CD8-positive, alpha-beta T cell (primary cell): ENCODE measurements at regions of chr17 and their contacts with region 1.

Region 1: GRCh38 chr17:28644985-28645939 is at the start of gene BLTP2:
- DNase-seq: peak; percentile 91 to 98 (median 96)
- ATAC-seq: peak; percentile 98
- H3K4me3 ChIP-seq: peak within 1 kb of the TSS; percentile 81 to 82
- H3K4me3 Mint-ChIP-seq: peak within 1 kb of the TSS; percentile 90
- H3K27ac ChIP-seq: peak within 1 kb of the TSS; percentile 75 to 89
- H3K27ac Mint-ChIP-seq: peak within 1 kb of the TSS; percentile 95
- H3K4me1 ChIP-seq: peaks cover 34% of the 10 kb centered on the region
- H3K4me1 Mint-ChIP-seq: peaks cover 46% of the 10 kb centered on the region
- H3K27me3 ChIP-seq: no peaks in the 10 kb centered on the region
- H3K27me3 Mint-ChIP-seq: no peaks in the 10 kb centered on the region
- CTCF ChIP-seq: no peak
- total RNA-seq, gene BLTP2: 136 to 148 TPM

Region 2: GRCh38 chr17:28576758-28577465 is 68.3 kb before region 1 on chr17 and contains the start of gene ALDOC:
- CTCF ChIA-PET with region 1: no interaction called
- POLR2A ChIA-PET with region 1: interaction called, 10 read pairs
- intact Hi-C with region 1: no loop called
- DNase-seq: peak; percentile 95 to 99 (median 99)
- ATAC-seq: peak; percentile 99
- H3K4me3 ChIP-seq: peak within 1 kb of the TSS; percentile 36 to 40
- H3K4me3 Mint-ChIP-seq: peak within 1 kb of the TSS; percentile 81
- H3K27ac ChIP-seq: peak within 1 kb of the TSS; percentile 17 to 62
- H3K27ac Mint-ChIP-seq: peak within 1 kb of the TSS; percentile 92
- H3K4me1 ChIP-seq: peaks cover 28% of the 10 kb centered on the region
- H3K4me1 Mint-ChIP-seq: peaks cover 42% of the 10 kb centered on the region
- H3K27me3 ChIP-seq: no peaks in the 10 kb centered on the region
- H3K27me3 Mint-ChIP-seq: no peaks in the 10 kb centered on the region
- CTCF ChIP-seq: no peak
- total RNA-seq, gene ALDOC: 16.3 to 16.5 TPM

Region 3: DNA sequence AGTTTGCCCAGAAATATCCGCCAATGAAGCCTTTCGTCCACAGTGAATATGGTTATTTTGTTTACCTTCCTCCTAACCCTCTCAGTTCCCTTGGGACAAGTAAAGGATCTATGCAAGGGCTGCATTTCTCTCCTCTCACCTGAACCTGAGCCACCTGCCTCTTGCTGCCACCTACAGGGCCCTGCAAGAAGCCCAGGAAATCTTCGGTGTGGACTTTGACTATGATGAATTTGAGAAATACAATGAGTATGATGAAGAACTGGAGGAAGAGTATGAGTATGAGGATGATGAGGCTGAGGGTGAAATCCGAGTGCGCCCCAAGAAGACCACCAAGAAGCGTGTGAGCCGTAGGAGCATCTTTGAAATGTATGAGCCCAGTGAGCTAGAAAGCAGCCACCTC is 30.7 kb after region 1 on chr17:
- CTCF ChIA-PET with region 1: interaction called, 11 read pairs
- POLR2A ChIA-PET with region 1: no interaction called
- intact Hi-C with region 1: loop called in 1 of 2 experiments (anchors 1 kb)
- DNase-seq: peak in 2 of 9 experiments; percentile 26 to 37
- ATAC-seq: peak; percentile 59
- H3K4me3 ChIP-seq: no peak overlapping the region
- H3K4me3 Mint-ChIP-seq: no peak overlapping the region
- H3K27ac ChIP-seq: no peak overlapping the region
- H3K27ac Mint-ChIP-seq: no peak overlapping the region
- H3K4me1 ChIP-seq: no peaks in the 10 kb centered on the region
- H3K4me1 Mint-ChIP-seq: peaks cover 3% of the 10 kb centered on the region
- H3K27me3 ChIP-seq: no peaks in the 10 kb centered on the region
- H3K27me3 Mint-ChIP-seq: no peaks in the 10 kb centered on the region
- CTCF ChIP-seq: no peak

Region 4: DNA sequence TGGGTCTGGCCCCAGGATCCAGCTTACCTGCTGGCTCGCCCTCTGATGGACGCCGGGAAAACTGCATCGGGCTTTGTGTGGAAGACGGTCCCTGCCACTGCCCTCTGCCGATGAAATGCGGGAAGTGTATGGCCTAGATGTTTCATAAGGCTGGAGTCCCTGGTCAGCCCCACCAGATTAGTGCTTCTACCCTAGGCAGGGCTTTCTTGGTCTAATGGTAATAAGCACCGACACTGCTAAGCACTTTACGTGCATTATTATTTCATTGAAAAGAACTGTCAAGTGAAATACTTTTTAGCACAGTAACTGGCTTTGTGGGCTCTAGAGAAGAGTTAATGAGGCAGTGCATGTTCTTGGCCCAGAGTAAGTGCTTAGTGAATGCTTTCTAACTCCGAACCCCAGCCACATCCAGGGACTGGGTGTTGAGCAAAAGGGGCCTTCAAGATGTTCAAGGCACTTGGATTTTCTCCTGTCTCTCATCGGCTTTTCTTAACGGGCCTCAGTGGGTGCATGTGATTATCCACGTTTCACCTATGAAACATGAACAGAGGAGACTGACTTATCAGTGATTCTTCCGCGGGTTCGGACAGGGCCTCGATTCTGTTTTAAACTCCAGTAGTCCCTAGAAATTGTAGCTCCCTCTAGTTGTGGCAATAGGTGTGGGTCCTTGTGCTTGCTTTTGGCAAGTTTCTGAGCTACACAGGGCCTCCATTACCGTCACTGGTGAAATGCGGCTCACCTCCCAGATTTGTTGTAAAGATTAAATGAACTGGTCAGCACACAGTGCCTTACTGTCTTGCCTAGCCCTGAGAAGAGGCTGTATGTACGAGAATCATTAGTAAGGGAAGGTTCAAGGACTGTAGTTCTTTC is 105.2 kb after region 1 on chr17:
- CTCF ChIA-PET with region 1: interaction called, 9 read pairs
- POLR2A ChIA-PET with region 1: no interaction called
- intact Hi-C with region 1: loop called (anchors 1 to 2 kb)
- DNase-seq: peak; percentile 69 to 93 (median 89)
- ATAC-seq: peak; percentile 93
- H3K4me3 ChIP-seq: no peak overlapping the region
- H3K4me3 Mint-ChIP-seq: no peak overlapping the region
- H3K27ac ChIP-seq: no peak overlapping the region
- H3K27ac Mint-ChIP-seq: no peak overlapping the region
- H3K4me1 ChIP-seq: peaks cover 15% of the 10 kb centered on the region
- H3K4me1 Mint-ChIP-seq: peaks cover 16% of the 10 kb centered on the region
- H3K27me3 ChIP-seq: no peaks in the 10 kb centered on the region
- H3K27me3 Mint-ChIP-seq: no peaks in the 10 kb centered on the region
- CTCF ChIP-seq: peak; percentile 99

Region 5: DNA sequence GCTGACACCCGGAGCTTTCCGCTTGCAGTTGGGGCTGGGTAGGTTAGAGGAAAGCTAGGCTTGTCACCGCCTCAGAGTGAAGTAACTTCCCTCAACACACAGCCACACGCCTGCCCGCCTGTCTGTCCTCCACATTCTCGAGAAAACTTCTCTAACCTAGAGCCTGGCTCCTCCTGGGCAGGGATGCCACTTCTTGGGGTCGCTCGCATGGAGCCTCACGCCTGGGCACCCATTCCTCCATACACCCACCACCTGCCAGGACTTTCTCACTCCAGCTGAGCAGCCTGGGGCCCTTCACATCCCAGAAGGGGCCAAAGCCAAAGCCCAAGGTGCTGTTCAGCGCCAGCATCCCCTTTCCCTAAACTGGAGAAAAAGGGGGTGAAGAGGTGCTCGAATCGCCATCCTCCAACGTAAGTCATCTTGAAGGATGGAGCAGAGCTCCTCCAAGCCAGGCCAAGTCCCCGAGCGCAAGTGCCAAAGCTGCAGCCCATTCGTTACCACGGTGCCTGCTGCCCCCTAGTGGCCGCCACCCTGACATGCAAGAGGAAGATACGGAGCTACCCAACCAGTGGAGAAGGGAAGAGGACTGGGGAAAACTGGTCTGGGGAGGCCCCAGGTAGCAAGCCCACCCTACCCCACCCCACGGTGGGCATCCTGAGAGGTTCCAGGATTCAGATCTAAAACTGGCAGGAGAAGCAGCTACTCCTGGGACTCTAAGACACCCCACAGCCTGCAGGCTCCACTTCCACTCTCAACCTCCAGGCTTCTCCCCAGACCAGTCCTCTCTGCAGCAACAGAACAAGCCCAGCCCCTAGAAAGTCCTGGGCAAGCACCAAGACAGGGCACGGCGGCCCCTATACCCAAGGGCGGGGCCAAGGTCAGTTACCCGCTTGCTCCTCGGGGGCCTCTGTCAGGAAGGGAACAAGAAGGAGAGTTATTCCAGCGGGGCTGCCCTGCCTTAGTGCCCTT is 471.8 kb after region 1 on chr17:
- CTCF ChIA-PET with region 1: interaction called, 3 read pairs
- POLR2A ChIA-PET with region 1: no interaction called
- intact Hi-C with region 1: loop called in 1 of 2 experiments (anchors 5 kb)
- DNase-seq: peak; percentile 58 to 86 (median 80)
- ATAC-seq: peak; percentile 90
- H3K4me3 ChIP-seq: no peak overlapping the region
- H3K4me3 Mint-ChIP-seq: no peak overlapping the region
- H3K27ac ChIP-seq: no peak overlapping the region
- H3K27ac Mint-ChIP-seq: no peak overlapping the region
- H3K4me1 ChIP-seq: peaks cover 3% of the 10 kb centered on the region
- H3K4me1 Mint-ChIP-seq: peaks cover 2% of the 10 kb centered on the region
- H3K27me3 ChIP-seq: no peaks in the 10 kb centered on the region
- H3K27me3 Mint-ChIP-seq: no peaks in the 10 kb centered on the region
- CTCF ChIP-seq: peak; percentile 94